ENCODE measurements at regions of chr5 and their contacts with region 1.

Region 1: GRCh38 chr5:76867827-76868693 is 18.2 kb downstream of the S100Z start:
- DNase-seq: no peak
- ATAC-seq: peak; percentile 71

Region 2: GRCh38 chr5:76537073-76537543 is 331.0 kb before region 1 on chr5:
- intact Hi-C with region 1: no loop called
- DNase-seq: no peak
- ATAC-seq: no peak

Region 3: DNA sequence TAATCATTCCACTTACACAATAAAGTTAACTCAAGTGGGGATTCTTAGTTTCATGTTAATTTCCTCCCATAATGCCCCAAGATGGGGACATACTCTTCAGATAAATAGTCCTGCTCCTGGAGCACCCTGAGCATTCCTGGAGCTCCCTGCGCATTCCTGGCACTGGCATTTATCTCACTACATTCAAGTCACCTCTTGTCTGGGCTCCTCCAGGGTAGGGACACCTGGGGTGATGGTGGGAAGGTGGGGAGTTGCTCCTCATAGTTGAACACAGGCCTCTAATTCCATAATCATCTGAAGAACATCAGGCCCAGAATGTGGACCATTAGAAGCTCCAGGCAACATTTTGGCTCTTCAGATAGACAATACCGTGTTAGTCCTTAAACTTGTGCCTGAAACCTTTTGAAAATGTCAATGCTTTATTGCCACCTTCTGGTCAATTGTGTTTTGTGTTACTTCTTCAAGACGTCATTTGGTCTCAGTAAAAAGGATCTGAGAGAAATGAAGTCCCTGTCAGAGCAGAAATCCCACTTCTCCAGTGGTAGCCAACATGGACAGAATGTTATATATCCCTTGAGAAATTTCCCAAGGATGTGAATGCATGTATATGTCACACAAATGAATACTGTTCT is 148.0 kb after region 1 on chr5:
- intact Hi-C with region 1: loop called (anchors 2 kb)
- DNase-seq: no peak
- ATAC-seq: no peak

Region 4: DNA sequence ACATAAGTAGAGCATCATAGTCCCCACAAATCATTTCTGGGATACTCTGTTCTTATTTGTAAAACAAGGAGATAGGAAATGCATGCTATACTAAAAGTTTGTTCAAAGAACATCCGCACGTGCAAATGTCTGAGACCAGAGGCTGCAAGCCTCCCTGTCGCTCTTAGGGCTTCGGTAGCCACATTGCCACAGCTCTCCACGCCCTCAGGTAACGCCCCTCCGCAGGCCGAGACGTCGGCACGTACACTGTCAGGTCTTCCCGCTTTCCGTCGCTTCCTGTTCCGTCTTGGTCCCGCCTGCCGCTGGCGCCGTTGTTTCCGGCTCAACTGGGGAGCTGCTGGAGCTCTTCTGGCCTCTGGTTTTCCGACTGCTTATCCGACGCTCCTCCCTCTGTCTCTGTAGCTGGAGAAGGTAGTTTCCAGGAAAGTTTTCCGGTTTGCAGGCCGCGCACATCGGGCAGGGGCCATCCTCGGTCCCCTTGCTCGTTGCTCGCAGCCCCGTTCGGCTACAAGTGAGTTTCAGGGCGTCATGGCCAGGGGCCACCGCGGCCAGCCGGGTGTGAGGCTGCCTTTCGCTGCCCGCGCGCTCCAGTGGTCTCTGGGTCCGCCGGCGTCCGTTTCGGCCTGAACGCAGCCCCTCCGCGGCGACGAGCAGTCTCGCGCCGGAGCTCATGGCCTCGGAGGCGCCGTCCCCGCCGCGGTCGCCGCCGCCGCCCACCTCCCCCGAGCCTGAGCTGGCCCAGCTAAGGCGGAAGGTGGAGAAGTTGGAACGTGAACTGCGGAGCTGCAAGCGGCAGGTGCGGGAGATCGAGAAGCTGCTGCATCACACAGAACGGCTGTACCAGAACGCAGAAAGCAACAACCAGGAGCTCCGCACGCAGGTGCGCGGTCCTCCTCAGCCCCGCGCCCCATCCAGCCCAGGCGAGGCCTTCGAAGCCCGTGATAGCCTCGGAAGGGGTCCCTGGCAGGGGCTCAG is 162.3 kb after region 1 on chr5 and contains the start of gene AGGF1:
- intact Hi-C with region 1: loop called (anchors 5 kb)
- DNase-seq: peak; percentile 96
- ATAC-seq: peak; percentile 100
- total RNA-seq, gene AGGF1: 14.5 TPM

Region 5: DNA sequence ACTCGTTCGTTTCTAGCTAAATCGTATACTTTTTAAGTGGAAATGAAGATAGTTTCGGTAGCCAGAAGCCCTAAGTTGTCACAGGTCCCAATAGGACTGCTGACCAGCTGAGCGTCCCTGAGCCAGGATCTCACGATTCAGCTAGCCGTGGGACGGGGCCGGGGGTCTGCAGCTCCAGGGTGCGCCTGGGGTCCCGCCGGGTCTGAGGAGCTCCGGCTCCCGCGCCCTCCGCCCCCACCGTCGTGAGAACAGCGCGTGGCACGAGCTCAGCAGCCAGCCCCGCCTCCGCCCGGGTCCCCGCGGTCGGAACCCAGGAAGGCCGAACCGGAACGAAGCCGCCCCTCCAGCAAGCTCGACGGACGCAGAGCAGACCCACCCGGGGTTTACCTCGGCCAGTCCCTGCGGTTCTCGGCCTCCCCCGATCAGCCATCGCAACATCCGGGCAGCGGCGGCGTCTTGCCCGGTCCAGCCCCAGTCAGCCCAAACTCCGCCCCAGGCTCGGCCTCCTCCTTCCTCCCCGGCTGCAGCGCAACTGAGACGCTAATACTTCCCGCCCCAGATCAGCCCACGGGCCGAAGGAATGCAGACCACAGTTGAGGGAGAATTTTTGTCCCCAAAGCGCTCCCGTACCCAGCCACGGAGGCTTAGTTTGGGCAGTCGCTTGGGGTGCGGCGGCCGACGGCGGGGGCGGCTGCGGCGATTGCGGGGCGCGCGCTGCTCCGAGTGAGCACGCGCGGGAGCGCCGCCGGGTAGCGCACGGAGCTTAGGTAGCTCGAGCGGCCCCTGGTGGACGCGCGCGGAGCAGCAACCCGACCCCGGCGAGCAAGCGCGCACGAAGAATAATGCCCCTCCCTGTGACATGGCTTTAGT is 624.0 kb after region 1 on chr5 and contains the start of gene WDR41:
- intact Hi-C with region 1: loop called (anchors 10 kb)
- DNase-seq: peak; percentile 97
- ATAC-seq: peak; percentile 97
- total RNA-seq, gene WDR41: 28.3 TPM

Measured in Right ventricle myocardium inferior (tissue), 1 donor.